ENCODE measurements at regions of chr1 and their contacts with region 1.

Region 1: GRCh38 chr1:232627645-232628334 is 2.1 kb downstream of the SIPA1L2 start:
- DNase-seq: no peak
- ATAC-seq: peak; percentile 13
- H3K4me3 Mint-ChIP-seq: peak overlapping the region; percentile 92
- H3K27ac Mint-ChIP-seq: no peak overlapping the region
- H3K4me1 Mint-ChIP-seq: peaks cover 62% of the 10 kb centered on the region
- H3K27me3 Mint-ChIP-seq: peaks cover 42% of the 10 kb centered on the region
- CTCF ChIP-seq: no peak

Region 2: GRCh38 chr1:232292818-232293217 is 335.0 kb before region 1 on chr1:
- CTCF ChIA-PET with region 1: no interaction called
- POLR2A ChIA-PET with region 1: no interaction called
- DNase-seq: no peak
- ATAC-seq: 0 out of 2 replicates have a peak, but pooled peaks have one; percentile 43
- H3K4me3 Mint-ChIP-seq: no peak overlapping the region
- H3K27ac Mint-ChIP-seq: no peak overlapping the region
- H3K4me1 Mint-ChIP-seq: no peaks in the 10 kb centered on the region; the same call in 1 of the 2 replicates
- H3K27me3 Mint-ChIP-seq: peaks cover 14% of the 10 kb centered on the region
- CTCF ChIP-seq: no peak

Region 3: DNA sequence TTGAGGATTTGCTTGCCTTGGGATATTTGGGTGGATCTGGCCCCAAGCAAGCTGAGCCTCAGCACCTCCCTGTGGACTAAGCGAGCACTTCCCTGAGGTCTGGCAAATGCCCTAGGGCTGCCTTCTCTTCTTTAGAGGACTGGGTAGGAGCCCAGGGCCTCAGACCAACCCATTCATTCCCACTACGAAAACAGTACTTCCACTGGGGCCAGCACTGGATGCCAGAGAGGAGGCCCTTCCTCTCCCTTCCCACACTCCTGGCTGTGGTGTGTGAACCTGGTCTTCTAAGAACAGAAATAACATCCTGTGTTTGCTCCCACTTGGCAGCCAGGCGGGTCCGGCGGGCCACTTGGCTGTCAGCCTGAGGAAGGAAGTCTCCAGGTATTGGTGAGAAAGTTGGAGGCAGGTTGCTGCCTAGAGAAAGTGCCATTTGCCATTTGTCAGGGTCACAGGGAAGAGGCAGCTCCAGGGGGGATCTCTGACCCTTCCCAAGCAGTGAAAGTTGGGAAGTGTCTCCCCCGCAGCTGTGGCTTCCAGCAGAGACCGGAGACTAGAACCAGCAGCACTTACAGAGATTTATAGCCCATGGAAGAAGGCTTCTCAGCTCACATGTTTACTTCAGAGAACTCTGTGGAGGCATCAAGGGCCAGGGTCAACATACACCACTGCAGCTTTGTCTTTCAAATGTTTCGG is 321.4 kb before region 1 on chr1:
- CTCF ChIA-PET with region 1: interaction called, 20 read pairs
- POLR2A ChIA-PET with region 1: interaction called, 3 read pairs
- DNase-seq: peak; percentile 35
- ATAC-seq: peak; percentile 94
- H3K4me3 Mint-ChIP-seq: no peak overlapping the region
- H3K27ac Mint-ChIP-seq: peak overlapping the region; percentile 17; the same call in 1 of the 2 replicates
- H3K4me1 Mint-ChIP-seq: peaks cover 31% of the 10 kb centered on the region
- H3K27me3 Mint-ChIP-seq: peaks cover 6% of the 10 kb centered on the region
- CTCF ChIP-seq: no peak

Region 4: DNA sequence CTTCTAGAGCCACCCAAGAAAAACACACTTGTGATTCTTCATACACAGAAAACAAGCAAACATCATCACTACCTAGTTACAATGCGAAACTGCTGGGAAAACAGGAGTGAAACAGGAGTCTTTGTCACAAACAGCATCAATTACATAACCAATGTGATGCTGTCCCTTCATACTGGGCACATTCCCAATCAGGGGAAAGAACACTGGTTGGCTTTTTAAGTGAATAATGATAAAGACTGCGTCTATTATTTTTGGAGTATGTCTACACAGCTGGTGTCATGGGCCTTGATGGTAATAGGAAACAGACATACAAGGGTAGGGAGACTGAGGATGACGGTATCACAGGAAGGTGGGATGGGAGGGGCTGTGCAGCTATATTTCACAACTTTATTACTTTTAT is 41.1 kb before region 1 on chr1:
- CTCF ChIA-PET with region 1: no interaction called
- POLR2A ChIA-PET with region 1: no interaction called
- DNase-seq: no peak
- ATAC-seq: no peak
- H3K4me3 Mint-ChIP-seq: no peak overlapping the region
- H3K27ac Mint-ChIP-seq: no peak overlapping the region
- H3K4me1 Mint-ChIP-seq: peaks cover 13% of the 10 kb centered on the region
- H3K27me3 Mint-ChIP-seq: no peaks in the 10 kb centered on the region
- CTCF ChIP-seq: no peak

Region 5: DNA sequence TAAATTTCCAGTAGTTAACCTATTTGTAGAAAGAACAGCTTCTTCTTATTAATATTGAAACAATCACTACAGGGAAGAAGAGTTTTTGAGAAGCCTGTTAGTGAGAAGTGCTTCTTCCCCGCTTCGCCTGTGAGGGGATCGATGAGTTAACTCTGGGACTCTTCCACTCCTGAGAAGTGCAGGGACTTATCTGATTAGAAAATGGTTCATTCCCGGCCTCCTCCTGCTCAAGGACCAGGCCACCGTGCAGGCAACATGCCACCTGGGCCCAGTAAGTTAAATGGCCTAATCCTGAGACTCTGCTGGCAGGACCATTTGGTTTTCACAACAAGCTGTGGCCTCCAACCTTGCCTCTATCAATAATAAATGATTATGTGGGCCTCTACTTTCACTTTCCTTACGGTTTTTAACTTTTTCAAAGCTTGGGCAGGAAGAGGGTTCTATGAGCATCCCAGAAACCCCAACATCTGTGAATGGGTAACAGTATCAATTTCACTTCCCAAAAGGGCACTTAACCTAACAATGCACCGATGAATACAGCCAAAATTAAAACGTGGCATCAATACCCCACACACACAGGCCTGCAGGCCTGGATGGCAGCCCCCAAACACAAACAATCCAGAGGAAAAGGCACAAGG is 31.0 kb before region 1 on chr1:
- CTCF ChIA-PET with region 1: interaction called, 19 read pairs
- POLR2A ChIA-PET with region 1: no interaction called
- DNase-seq: no peak
- ATAC-seq: no peak
- H3K4me3 Mint-ChIP-seq: no peak overlapping the region
- H3K27ac Mint-ChIP-seq: no peak overlapping the region
- H3K4me1 Mint-ChIP-seq: peaks cover 13% of the 10 kb centered on the region
- H3K27me3 Mint-ChIP-seq: no peaks in the 10 kb centered on the region
- CTCF ChIP-seq: no peak

Region 6: DNA sequence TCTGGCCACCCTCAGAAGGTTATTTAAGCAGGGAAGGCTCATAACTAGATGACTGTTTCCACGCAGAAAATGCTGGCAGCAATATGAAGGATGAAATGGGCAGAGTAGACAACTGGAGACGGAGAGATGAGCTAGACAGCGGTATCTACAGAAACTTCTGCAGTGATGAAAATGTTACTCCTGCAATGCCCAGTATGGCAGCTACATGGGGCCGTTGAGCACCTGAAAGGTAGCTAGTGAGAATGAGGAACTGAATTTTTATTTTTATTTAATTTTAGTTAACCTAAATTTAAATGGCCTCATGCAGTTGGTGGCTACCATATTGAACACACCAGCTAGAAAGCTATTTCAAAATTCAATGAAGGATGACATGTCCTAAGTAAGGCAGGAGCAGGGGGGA is 25.2 kb before region 1 on chr1:
- CTCF ChIA-PET with region 1: interaction called, 14 read pairs
- POLR2A ChIA-PET with region 1: no interaction called
- DNase-seq: no peak
- ATAC-seq: peak; percentile 60
- H3K4me3 Mint-ChIP-seq: no peak overlapping the region
- H3K27ac Mint-ChIP-seq: no peak overlapping the region
- H3K4me1 Mint-ChIP-seq: peaks cover 16% of the 10 kb centered on the region
- H3K27me3 Mint-ChIP-seq: no peaks in the 10 kb centered on the region
- CTCF ChIP-seq: peak; percentile 46; the same call in 1 of the 2 replicates

Region 7: DNA sequence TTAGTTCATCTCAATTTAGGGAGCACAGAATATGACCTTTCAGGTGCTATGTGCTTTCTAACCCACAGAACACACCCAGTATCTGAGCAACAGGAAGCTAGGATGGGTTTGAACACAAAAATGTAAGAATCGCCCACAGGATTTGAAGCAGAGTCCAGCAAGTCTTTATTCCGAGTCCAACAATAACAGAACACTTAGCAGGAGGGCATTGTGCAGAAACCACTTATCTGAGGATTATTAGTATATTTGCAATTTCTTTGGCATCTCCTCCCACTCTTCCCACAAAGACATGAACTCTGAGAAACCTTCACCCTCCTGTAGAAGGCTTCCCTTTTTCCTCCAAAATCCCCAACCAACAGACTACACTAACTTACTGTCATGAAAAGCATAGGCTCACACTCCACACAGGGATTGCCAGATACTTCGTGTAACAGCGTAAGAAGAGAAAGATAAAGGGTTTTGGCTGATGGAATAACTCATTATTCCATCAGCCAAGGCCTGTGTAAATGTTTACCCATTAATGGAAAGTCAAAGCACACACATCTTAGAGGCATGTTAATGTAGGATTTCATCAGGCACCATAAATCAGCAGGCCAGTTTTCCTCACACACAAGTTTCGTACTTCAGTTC is 13.9 kb before region 1 on chr1:
- CTCF ChIA-PET with region 1: interaction called, 25 read pairs
- POLR2A ChIA-PET with region 1: interaction called, 3 read pairs
- DNase-seq: no peak
- ATAC-seq: no peak
- H3K4me3 Mint-ChIP-seq: no peak overlapping the region
- H3K27ac Mint-ChIP-seq: no peak overlapping the region
- H3K4me1 Mint-ChIP-seq: peaks cover 48% of the 10 kb centered on the region
- H3K27me3 Mint-ChIP-seq: no peaks in the 10 kb centered on the region
- CTCF ChIP-seq: no peak